ENCODE measurements at regions of chr17 and their contacts with region 1.

Region 1: GRCh38 chr17:76623271-76624146 is 20.0 kb downstream of the ST6GALNAC1 start:
- DNase-seq: peak; percentile 82
- H3K4me3 Mint-ChIP-seq: no peak overlapping the region
- H3K27ac Mint-ChIP-seq: no peak overlapping the region
- H3K4me1 Mint-ChIP-seq: no peaks in the 10 kb centered on the region
- H3K27me3 Mint-ChIP-seq: peaks cover 34% of the 10 kb centered on the region

Region 2: DNA sequence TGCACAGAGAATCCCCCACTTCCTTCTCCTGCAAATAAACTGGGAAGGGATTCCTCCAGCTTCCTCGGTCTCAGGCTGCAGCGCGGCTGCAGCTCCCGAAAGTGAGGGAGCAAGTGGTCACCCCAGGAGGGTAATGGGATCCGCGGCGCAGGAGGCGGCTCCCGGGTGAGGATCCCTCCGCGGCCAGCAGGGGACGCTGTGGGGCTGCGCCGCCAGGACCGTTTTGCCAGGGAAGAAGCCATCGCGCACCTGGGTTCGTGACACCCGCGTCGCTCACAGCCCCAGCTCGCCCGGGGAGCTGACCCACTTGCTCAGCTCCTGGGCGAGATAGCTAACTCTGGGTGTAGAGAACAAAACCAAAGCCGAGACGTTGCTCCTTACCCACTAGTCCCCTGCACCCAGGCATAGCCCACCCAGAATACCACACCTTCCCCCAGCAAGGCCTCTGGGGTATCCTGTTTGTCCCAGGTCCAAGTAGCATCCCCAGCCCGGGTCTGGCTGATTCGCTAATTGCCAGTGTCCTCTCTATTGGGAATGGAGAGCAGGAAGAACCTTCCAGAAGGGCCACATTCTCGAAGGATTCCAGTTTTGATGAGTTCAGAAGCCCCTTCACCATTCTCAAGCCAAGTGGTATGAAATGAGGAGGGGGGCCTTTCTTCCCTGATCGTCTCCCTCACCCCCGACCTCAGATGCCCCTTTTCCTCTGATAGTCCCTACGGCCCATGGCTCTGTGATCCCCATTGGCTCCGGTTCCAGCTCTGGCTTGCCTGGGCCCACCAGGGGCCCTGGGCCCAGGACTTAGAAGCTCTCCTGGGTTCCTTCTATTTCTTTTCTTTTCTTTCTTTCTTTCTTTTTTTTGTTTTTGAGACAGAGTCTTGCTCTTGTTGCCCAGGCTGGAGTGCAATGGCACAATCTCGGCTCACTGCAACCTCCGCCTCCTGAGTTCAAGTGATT is 100.1 kb before region 1 on chr17:
- CTCF ChIA-PET with region 1: interaction called, 54 read pairs
- DNase-seq: peak; percentile 86
- H3K4me3 Mint-ChIP-seq: no peak overlapping the region
- H3K27ac Mint-ChIP-seq: no peak overlapping the region
- H3K4me1 Mint-ChIP-seq: peaks cover 27% of the 10 kb centered on the region
- H3K27me3 Mint-ChIP-seq: peaks cover 63% of the 10 kb centered on the region

Region 3: GRCh38 chr17:76567634-76568432 is 55.7 kb before region 1 on chr17:
- CTCF ChIA-PET with region 1: interaction called, 61 read pairs
- DNase-seq: no peak
- H3K4me3 Mint-ChIP-seq: no peak overlapping the region
- H3K27ac Mint-ChIP-seq: no peak overlapping the region
- H3K4me1 Mint-ChIP-seq: peaks cover 13% of the 10 kb centered on the region
- H3K27me3 Mint-ChIP-seq: peaks cover 5% of the 10 kb centered on the region

Region 4: GRCh38 chr17:76635659-76636360 is 12.3 kb after region 1 on chr17:
- CTCF ChIA-PET with region 1: interaction called, 12 read pairs
- DNase-seq: no peak
- H3K4me3 Mint-ChIP-seq: no peak overlapping the region
- H3K27ac Mint-ChIP-seq: no peak overlapping the region
- H3K4me1 Mint-ChIP-seq: peaks cover 3% of the 10 kb centered on the region
- H3K27me3 Mint-ChIP-seq: peaks cover 27% of the 10 kb centered on the region